H1 (cell line): ENCODE measurements at regions of chr2 and their contacts with region 1.

Region 1: DNA sequence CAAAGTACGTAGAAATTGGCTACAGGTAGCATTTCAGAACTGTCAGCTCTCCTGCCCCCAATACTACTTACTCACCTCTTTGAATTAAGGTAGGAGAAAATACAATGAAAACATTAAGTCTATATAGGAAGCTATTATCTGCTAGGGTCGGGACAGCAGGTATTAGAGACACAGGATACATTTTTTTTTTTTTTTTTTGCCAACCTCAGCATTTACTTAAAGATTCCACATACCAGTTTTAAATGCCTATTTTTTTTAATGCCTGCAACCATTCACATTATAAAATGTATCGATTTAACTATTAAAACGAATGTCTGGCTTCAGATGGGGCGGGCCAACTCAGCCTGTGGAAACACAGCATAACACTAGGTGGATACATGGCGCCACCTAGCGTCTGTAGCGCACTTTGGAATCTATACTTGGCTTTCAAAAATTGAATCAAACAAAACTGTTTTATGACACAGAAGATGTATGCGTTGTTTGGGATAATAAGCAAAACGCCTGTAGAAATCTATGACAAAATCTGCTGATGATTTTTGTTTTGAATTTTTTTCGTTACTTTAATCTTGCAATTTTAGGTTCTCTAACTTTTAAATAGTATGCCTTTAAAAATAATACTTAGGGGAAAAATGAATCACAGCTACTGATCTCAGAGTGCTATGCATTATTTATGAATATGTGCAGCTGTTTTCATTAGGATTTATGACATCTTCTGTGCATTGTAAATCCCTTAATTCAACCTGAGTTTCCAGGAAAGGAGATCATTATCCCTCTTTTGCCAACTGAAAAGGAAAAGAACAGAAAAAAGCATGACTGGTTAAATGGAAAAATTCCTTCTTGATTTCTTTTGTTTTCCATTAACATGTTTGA is 261.0 kb downstream of the NYAP2 start:
- DNase-seq: peak in 1 of 2 experiments; percentile 82
- H3K4me3 ChIP-seq: no peak overlapping the region
- H3K27ac ChIP-seq: no peak overlapping the region
- H3K4me1 ChIP-seq: peaks cover 0 to 3% (median 1%) of the 10 kb centered on the region in 4 experiments; a peak in 2 of 7 replicates
- H3K27me3 ChIP-seq: no peaks in the 10 kb centered on the region
- CTCF ChIP-seq: peak; percentile 56 to 81 (median 78)
- EP300 ChIP-seq: no peak
- POLR2A ChIP-seq: no peak
- RAD21 ChIP-seq: peak; percentile 95

Region 2: GRCh38 chr2:225002039-225002655 is 658.4 kb before region 1 on chr2:
- CTCF ChIA-PET with region 1: interaction called, 11 read pairs
- POLR2A ChIA-PET with region 1: no interaction called
- DNase-seq: peak in 1 of 2 experiments; percentile 57
- H3K4me3 ChIP-seq: no peak overlapping the region
- H3K27ac ChIP-seq: no peak overlapping the region
- H3K4me1 ChIP-seq: no peaks in the 10 kb centered on the region; a peak in 2 of 7 replicates
- H3K27me3 ChIP-seq: no peaks in the 10 kb centered on the region
- CTCF ChIP-seq: peak in 2 of 3 experiments; percentile 62 to 89; a peak in 3 of 4 replicates
- EP300 ChIP-seq: no peak
- POLR2A ChIP-seq: no peak
- RAD21 ChIP-seq: peak; percentile 86

Region 3: GRCh38 chr2:225117051-225117716 is 543.3 kb before region 1 on chr2:
- CTCF ChIA-PET with region 1: interaction called, 16 read pairs
- POLR2A ChIA-PET with region 1: no interaction called
- DNase-seq: no peak
- H3K4me3 ChIP-seq: no peak overlapping the region
- H3K27ac ChIP-seq: no peak overlapping the region
- H3K4me1 ChIP-seq: 0 out of 7 replicates have a peak, but pooled peaks cover 0 to 3% (median 0%) of the 10 kb centered on the region in 4 experiments
- H3K27me3 ChIP-seq: no peaks in the 10 kb centered on the region
- CTCF ChIP-seq: no peak
- EP300 ChIP-seq: no peak
- POLR2A ChIP-seq: no peak
- RAD21 ChIP-seq: no peak

Region 4: GRCh38 chr2:225122583-225123486 is 537.7 kb before region 1 on chr2:
- CTCF ChIA-PET with region 1: interaction called, 19 read pairs
- POLR2A ChIA-PET with region 1: no interaction called
- DNase-seq: peak in 1 of 2 experiments; percentile 48
- H3K4me3 ChIP-seq: no peak overlapping the region
- H3K27ac ChIP-seq: no peak overlapping the region
- H3K4me1 ChIP-seq: 0 out of 7 replicates have a peak, but pooled peaks cover 0 to 3% (median 0%) of the 10 kb centered on the region in 4 experiments
- H3K27me3 ChIP-seq: no peaks in the 10 kb centered on the region
- CTCF ChIP-seq: peak in 2 of 3 experiments; percentile 15 to 25; a peak in 2 of 4 replicates
- EP300 ChIP-seq: no peak
- POLR2A ChIP-seq: no peak
- RAD21 ChIP-seq: peak; percentile 50 to 66

Region 5: GRCh38 chr2:225282858-225283710 is 377.4 kb before region 1 on chr2:
- CTCF ChIA-PET with region 1: interaction called, 68 read pairs
- POLR2A ChIA-PET with region 1: no interaction called
- DNase-seq: peak in 1 of 2 experiments; percentile 10
- H3K4me3 ChIP-seq: no peak overlapping the region
- H3K27ac ChIP-seq: no peak overlapping the region
- H3K4me1 ChIP-seq: peaks cover 0 to 4% (median 0%) of the 10 kb centered on the region in 4 experiments; a peak in 1 of 7 replicates
- H3K27me3 ChIP-seq: no peaks in the 10 kb centered on the region
- CTCF ChIP-seq: peak in 2 of 3 experiments; percentile 76 to 96; a peak in 3 of 4 replicates
- EP300 ChIP-seq: no peak
- POLR2A ChIP-seq: no peak
- RAD21 ChIP-seq: peak; percentile 85 to 86

Region 6: DNA sequence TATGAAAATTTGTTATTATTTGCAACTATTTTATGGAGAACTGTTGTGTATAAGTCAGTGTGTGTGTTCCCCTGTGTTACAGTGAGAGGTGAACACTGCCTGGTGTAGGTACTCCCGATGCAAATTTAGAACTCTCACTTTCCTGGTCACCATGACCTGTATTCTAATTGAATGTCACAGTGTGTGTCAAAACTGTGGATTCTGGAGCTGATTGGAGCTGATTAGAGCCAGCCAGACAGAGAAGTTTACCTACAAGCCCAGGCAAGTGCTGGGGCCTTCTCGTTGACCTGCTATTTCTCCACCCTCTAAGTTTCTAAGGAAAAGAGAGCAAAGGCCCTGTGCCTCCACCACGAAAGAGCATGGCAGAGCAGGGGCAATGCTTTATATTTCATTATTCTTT is 45.0 kb before region 1 on chr2:
- CTCF ChIA-PET with region 1: no interaction called
- POLR2A ChIA-PET with region 1: no interaction called
- DNase-seq: no peak
- H3K4me3 ChIP-seq: no peak overlapping the region
- H3K27ac ChIP-seq: no peak overlapping the region
- H3K4me1 ChIP-seq: no peaks in the 10 kb centered on the region
- H3K27me3 ChIP-seq: peaks cover 0 to 3% (median 0%) of the 10 kb centered on the region in 4 experiments; a peak in 1 of 7 replicates
- CTCF ChIP-seq: no peak
- EP300 ChIP-seq: no peak
- POLR2A ChIP-seq: no peak
- RAD21 ChIP-seq: no peak

Region 7: GRCh38 chr2:225649274-225649673 is 11.2 kb before region 1 on chr2:
- CTCF ChIA-PET with region 1: interaction called, 29 read pairs
- POLR2A ChIA-PET with region 1: no interaction called
- DNase-seq: no peak
- H3K4me3 ChIP-seq: no peak overlapping the region
- H3K27ac ChIP-seq: no peak overlapping the region
- H3K4me1 ChIP-seq: no peaks in the 10 kb centered on the region
- H3K27me3 ChIP-seq: no peaks in the 10 kb centered on the region
- CTCF ChIP-seq: no peak
- EP300 ChIP-seq: no peak
- POLR2A ChIP-seq: no peak
- RAD21 ChIP-seq: peak; percentile 14 to 31; a peak in 2 of 4 replicates